AG04449 (cell line): ENCODE measurements at regions of chr16 and their contacts with region 1.

Region 1: GRCh38 chr16:12228602-12229499 is 252.3 kb downstream of the SNX29 start:
- DNase-seq: no peak
- H3K4me3 ChIP-seq: no peak overlapping the region
- CTCF ChIP-seq: peak; percentile 92

Region 2: GRCh38 chr16:12193031-12193430 is 35.8 kb before region 1 on chr16:
- CTCF ChIA-PET with region 1: interaction called, 25 read pairs
- POLR2A ChIA-PET with region 1: no interaction called
- DNase-seq: no peak
- H3K4me3 ChIP-seq: no peak overlapping the region
- CTCF ChIP-seq: no peak

Region 3: DNA sequence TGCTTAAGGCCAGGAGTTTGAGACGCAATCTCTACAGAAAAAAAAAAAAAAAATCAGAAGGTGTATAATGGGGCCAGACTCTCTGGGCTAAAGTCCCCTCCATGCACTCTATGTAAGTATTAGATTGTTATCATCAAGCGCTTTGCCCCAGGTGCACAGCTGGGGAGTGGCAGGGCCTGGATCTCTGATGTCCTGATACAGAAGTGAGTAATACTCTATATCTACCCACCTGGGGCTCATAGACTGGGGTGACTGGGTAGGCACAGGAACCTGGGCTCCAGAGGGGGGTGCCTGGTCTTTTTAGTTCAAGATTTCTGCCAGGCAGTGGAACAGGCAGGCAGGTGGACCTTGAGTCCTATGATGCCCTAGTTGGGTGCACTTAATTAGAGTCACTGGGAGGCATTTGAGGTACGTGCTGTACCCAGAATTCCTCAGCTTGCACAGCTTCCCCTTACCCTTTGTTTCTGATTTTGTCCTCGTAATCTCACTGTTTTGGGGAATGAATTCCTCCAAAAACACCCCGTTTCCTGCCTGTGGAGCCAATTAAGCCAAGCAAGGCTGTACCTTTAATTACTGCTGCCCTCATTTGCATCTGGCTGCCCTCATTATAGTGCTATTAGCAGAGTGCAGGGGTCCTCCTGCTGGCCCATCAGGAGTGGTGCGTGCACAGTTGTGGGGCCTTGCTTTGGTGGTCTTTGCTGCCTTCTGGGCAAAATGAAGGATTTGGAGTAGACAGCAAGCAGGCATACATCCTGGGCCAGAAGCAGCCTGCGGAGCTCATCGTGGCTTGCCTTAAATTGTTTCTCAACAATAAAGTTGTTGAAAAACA is 13.4 kb before region 1 on chr16:
- CTCF ChIA-PET with region 1: interaction called, 68 read pairs
- POLR2A ChIA-PET with region 1: no interaction called
- DNase-seq: no peak
- H3K4me3 ChIP-seq: no peak overlapping the region
- CTCF ChIP-seq: peak; percentile 25

Region 4: DNA sequence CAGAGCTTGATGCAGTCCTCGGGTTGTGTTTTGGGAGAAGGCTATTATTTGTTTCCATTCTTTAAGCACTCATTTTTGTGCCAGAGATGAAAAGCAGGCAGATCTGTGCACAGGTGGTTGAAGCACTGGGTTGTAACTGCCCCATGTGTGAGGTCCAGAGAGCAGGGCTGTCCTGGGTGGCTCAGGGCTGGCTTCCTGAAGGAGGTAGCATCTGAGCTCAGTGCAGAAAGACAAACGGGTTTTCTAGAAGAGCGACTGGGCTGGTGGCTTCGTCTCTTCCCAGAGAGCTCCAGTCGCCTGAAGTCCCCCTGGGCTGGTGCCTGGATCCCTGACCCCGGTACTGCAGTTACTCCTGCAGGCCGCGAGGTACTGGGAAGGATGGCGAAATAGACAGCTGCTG is 21.7 kb after region 1 on chr16:
- CTCF ChIA-PET with region 1: interaction called, 12 read pairs
- POLR2A ChIA-PET with region 1: no interaction called
- DNase-seq: no peak
- H3K4me3 ChIP-seq: no peak overlapping the region
- CTCF ChIP-seq: no peak

Region 5: GRCh38 chr16:12455287-12455798 is 226.5 kb after region 1 on chr16:
- CTCF ChIA-PET with region 1: interaction called, 11 read pairs
- POLR2A ChIA-PET with region 1: no interaction called
- DNase-seq: no peak
- H3K4me3 ChIP-seq: no peak overlapping the region
- CTCF ChIP-seq: peak; percentile 84